ENCODE measurements at regions of chr2 and their contacts with region 1.

Region 1: GRCh38 chr2:111162718-111163331 is 42.1 kb downstream of the BCL2L11 start:
- DNase-seq: peak; percentile 97
- H3K4me3 ChIP-seq: no peak overlapping the region
- H3K27ac ChIP-seq: peak overlapping the region; percentile 39
- H3K4me1 ChIP-seq: peaks cover 31% of the 10 kb centered on the region
- H3K27me3 ChIP-seq: peaks cover 5 to 25% of the 10 kb centered on the region in 2 experiments
- CTCF ChIP-seq: no peak
- POLR2A ChIP-seq: peak; percentile 79

Region 2: DNA sequence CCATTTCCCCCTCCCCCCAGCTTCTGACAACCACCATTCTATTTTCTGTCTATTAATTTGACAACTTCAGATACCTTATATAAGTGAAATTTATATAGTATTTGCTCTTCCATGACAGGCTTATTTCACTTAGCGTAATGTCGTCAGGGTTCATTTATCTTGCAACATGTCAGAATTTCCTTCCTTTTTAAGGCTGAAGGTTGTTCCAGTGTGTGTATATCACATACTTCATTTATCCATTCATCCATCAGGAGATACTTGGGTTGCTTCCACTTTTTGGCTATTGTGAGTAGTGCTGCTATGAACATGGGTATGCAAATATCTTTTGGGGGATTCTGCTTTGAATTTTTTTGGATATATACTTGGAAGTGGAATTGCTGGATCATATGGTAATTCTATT is 34.7 kb before region 1 on chr2:
- CTCF ChIA-PET with region 1: no interaction called
- POLR2A ChIA-PET with region 1: no interaction called
- dilution Hi-C with region 1: no loop called
- intact Hi-C with region 1: no loop called
- DNase-seq: no peak
- H3K4me3 ChIP-seq: no peak overlapping the region
- H3K27ac ChIP-seq: no peak overlapping the region
- H3K4me1 ChIP-seq: peaks cover 3% of the 10 kb centered on the region
- H3K27me3 ChIP-seq: no peaks in the 10 kb centered on the region
- CTCF ChIP-seq: no peak
- POLR2A ChIP-seq: no peak

Region 3: GRCh38 chr2:111148925-111149324 is 13.9 kb before region 1 on chr2:
- CTCF ChIA-PET with region 1: interaction called, 30 read pairs
- POLR2A ChIA-PET with region 1: no interaction called
- dilution Hi-C with region 1: no loop called
- intact Hi-C with region 1: no loop called
- DNase-seq: peak; percentile 93
- H3K4me3 ChIP-seq: peak overlapping the region in 1 of 3 experiments; percentile 27
- H3K27ac ChIP-seq: peak overlapping the region; percentile 70
- H3K4me1 ChIP-seq: peaks cover 28% of the 10 kb centered on the region
- H3K27me3 ChIP-seq: peaks cover 0 to 5% of the 10 kb centered on the region in 2 experiments
- CTCF ChIP-seq: no peak
- POLR2A ChIP-seq: no peak

Region 4: GRCh38 chr2:111202266-111203040 is 39.6 kb after region 1 on chr2:
- CTCF ChIA-PET with region 1: interaction called, 3 read pairs
- POLR2A ChIA-PET with region 1: no interaction called
- dilution Hi-C with region 1: no loop called
- intact Hi-C with region 1: loop called (anchors 1 kb)
- DNase-seq: peak; percentile 91
- H3K4me3 ChIP-seq: no peak overlapping the region
- H3K27ac ChIP-seq: no peak overlapping the region
- H3K4me1 ChIP-seq: peaks cover 3% of the 10 kb centered on the region
- H3K27me3 ChIP-seq: no peaks in the 10 kb centered on the region
- CTCF ChIP-seq: no peak
- POLR2A ChIP-seq: no peak

Measured in endothelial cell of umbilical vein (primary cell).